ENCODE measurements at regions of chr7 and their contacts with region 1.

Region 1: DNA sequence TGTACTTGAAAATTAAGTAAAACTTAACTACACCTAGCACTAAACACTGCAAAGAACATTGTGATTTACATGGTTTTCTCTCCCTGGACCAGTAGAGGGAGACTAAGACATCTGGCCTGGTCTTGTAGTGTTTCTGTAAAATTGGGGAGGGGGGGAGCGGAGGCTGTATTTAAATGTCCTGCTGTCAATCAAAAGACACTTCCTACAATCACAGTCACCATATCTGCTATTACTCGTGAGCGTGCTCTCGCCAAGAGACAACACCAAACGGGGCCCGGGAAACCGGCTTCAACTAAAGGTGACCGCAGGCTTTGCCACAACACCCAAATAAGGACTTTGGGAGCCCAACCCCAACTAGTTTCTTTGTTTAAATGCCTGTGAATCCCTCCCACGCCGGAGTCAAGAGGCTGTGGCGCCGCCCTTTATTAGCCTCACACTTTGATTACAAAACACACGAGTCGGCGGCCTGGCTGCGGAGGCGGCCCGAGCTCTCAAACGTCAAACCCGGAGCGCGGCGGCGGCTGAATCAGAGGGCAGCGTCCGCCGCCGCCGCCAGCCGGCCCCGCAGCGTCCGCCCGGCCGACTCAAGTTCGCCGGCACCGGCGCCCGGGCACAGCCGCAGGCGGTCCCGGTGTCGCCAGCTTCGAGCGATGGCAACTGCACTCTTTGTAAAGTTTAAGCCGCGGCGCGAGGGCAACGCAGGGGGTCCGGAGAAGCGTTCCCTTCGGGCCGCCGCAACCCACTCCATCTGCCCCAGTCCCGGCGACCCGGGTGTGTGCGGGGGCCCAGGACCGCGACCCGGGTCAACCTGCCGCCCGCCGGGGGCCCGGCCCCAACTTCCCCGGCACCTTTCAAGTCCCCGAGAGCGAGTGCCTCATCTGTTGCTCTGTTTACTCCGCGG is 1.3 kb downstream of the KDM7A start:
- DNase-seq: peak; percentile 95
- H3K4me3 Mint-ChIP-seq: peak overlapping the region; percentile 80
- H3K27ac Mint-ChIP-seq: peak overlapping the region; percentile 91
- H3K4me1 Mint-ChIP-seq: peaks cover 52% of the 10 kb centered on the region
- H3K27me3 Mint-ChIP-seq: no peaks in the 10 kb centered on the region

Region 2: GRCh38 chr7:139915864-139916716 is 259.4 kb before region 1 on chr7:
- CTCF ChIA-PET with region 1: no interaction called
- POLR2A ChIA-PET with region 1: no interaction called
- intact Hi-C with region 1: loop called (anchors 1 kb)
- DNase-seq: peak; percentile 85
- H3K4me3 Mint-ChIP-seq: peak overlapping the region; percentile 24
- H3K27ac Mint-ChIP-seq: peak overlapping the region; percentile 80
- H3K4me1 Mint-ChIP-seq: peaks cover 28% of the 10 kb centered on the region
- H3K27me3 Mint-ChIP-seq: peaks cover 2% of the 10 kb centered on the region

Region 3: DNA sequence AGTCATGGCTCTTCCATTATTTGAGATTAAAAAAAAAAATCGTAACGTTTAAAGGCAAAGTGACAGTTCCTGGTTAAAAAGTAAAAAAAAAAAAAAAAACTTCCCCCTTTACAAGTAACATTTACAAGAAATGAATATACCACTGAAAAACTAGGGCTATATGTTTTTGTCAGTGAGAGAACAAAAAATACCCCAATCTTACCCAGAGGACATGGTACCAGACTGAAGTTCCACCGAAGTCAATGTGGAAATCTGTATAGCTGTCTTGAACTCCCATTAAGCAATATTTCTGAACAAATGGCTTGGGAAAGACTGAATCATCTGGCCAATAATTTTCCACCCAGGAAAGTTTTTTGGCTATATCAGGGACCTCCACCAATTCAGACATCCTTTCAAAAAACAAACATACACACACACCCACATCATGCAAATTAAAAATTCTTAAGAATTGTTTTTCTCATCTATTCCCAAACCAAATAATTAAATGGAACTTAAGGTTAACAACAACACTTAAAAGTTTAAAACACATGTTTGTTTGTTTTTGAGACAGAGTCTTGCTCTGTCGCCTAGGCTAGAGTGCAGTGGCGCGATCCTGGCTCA is 48.9 kb before region 1 on chr7:
- CTCF ChIA-PET with region 1: no interaction called
- POLR2A ChIA-PET with region 1: no interaction called
- intact Hi-C with region 1: no loop called
- DNase-seq: no peak
- H3K4me3 Mint-ChIP-seq: no peak overlapping the region
- H3K27ac Mint-ChIP-seq: no peak overlapping the region
- H3K4me1 Mint-ChIP-seq: peaks cover 19% of the 10 kb centered on the region
- H3K27me3 Mint-ChIP-seq: no peaks in the 10 kb centered on the region

Region 4: DNA sequence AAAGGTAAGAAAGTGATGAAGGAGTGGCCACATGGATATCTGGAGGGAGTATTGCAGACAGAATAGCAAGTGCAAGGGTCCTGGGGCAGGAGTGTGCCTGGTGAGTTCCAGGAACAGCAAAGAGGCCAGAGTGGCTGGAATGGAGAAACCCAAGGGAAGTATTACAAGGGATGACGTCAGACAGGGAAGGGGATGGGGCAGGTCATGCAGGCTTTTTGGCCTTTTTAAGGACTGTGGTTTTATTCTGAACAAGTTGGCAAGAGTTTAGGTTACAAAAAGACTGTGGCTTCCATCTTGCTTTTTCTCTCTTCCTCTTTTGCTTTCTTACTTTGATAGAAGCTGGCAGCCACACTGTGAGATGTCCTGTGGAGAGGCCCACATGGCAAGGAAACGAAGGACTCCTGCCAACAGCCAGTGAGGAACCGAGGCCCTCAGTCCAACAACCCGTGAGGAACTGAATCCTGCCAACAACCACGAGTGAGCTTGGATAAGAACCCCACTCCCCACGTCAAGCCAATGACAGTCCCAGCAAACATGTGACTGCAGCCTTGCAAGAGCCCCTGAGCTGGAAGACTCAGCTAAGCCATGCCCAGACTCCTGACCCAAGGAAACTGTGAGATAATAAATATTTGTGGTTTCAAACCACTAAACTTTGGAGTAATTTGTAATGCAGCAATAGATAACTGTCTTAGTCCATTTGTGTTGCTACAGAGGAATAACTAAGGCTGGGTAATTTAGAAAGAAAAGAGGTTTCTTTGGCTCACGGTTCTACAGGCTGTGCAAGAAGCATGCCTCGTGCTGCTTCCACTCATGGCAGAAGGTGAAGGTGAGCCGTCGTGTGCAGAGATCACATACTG is 21.1 kb after region 1 on chr7:
- CTCF ChIA-PET with region 1: interaction called, 6 read pairs
- POLR2A ChIA-PET with region 1: interaction called, 11 read pairs
- intact Hi-C with region 1: no loop called
- DNase-seq: no peak
- H3K4me3 Mint-ChIP-seq: no peak overlapping the region
- H3K27ac Mint-ChIP-seq: peak overlapping the region; percentile 24
- H3K4me1 Mint-ChIP-seq: peaks cover 33% of the 10 kb centered on the region
- H3K27me3 Mint-ChIP-seq: no peaks in the 10 kb centered on the region

Region 5: GRCh38 chr7:140249036-140249806 is 73.8 kb after region 1 on chr7:
- CTCF ChIA-PET with region 1: interaction called, 4 read pairs
- POLR2A ChIA-PET with region 1: interaction called, 22 read pairs
- intact Hi-C with region 1: loop called (anchors 1 kb)
- DNase-seq: no peak
- H3K4me3 Mint-ChIP-seq: no peak overlapping the region
- H3K27ac Mint-ChIP-seq: no peak overlapping the region
- H3K4me1 Mint-ChIP-seq: peaks cover 26% of the 10 kb centered on the region
- H3K27me3 Mint-ChIP-seq: no peaks in the 10 kb centered on the region

Region 6: DNA sequence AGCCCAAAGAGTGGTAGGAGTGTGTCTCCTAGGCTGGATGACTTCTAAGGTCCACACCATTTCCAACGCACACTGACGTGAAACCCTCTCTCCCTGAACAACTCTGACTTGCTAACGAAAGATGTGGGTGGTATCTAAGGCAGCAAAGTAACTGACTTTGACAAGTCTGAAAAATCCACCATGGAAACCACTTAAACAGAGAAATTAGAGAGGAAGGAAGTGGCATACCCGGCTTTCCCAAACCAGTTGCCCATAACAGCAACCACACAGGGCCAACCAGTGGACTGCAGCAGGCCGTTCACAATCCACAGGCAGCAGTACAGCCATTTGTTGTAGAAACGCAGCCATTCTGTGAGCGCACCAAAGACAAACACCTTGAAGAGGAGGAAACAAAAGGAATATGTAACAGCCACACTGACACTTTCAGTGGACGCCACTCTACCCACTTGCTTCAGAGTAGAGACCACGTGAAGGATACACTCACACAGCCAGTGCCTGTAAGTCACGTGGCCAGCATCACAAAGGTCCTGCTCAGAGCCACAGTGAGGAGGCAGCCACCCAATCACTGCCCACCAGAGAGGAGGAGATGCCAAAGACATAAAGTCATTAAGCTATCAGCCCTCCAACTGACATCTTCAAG is 183.1 kb after region 1 on chr7:
- CTCF ChIA-PET with region 1: no interaction called
- POLR2A ChIA-PET with region 1: interaction called, 3 read pairs
- intact Hi-C with region 1: loop called (anchors 1 kb)
- DNase-seq: peak; percentile 69
- H3K4me3 Mint-ChIP-seq: peak overlapping the region; percentile 46
- H3K27ac Mint-ChIP-seq: peak overlapping the region; percentile 97
- H3K4me1 Mint-ChIP-seq: peaks cover 34% of the 10 kb centered on the region
- H3K27me3 Mint-ChIP-seq: no peaks in the 10 kb centered on the region

Region 7: GRCh38 chr7:140494867-140495266 is 319.4 kb after region 1 on chr7:
- CTCF ChIA-PET with region 1: no interaction called
- POLR2A ChIA-PET with region 1: no interaction called
- intact Hi-C with region 1: loop called (anchors 1 kb)
- DNase-seq: no peak
- H3K4me3 Mint-ChIP-seq: no peak overlapping the region
- H3K27ac Mint-ChIP-seq: no peak overlapping the region
- H3K4me1 Mint-ChIP-seq: no peaks in the 10 kb centered on the region
- H3K27me3 Mint-ChIP-seq: no peaks in the 10 kb centered on the region

Measured in activated CD4-positive, alpha-beta memory T cell treated with anti-CD3 and anti-CD28 coated beads for 36 hours (primary cell).